ENCODE measurements at regions of chr4 and their contacts with region 1.

Region 1: GRCh38 chr4:110005461-110006056 is 92.9 kb downstream of the EGF start:
- DNase-seq: peak; percentile 80
- H3K4me3 Mint-ChIP-seq: no peak overlapping the region
- H3K27ac Mint-ChIP-seq: no peak overlapping the region
- H3K4me1 Mint-ChIP-seq: peaks cover 19% of the 10 kb centered on the region
- H3K27me3 Mint-ChIP-seq: peaks cover 7% of the 10 kb centered on the region

Region 2: GRCh38 chr4:109424093-109424841 is 581.3 kb before region 1 on chr4:
- intact Hi-C with region 1: no loop called
- DNase-seq: no peak
- H3K4me3 Mint-ChIP-seq: no peak overlapping the region
- H3K27ac Mint-ChIP-seq: no peak overlapping the region
- H3K4me1 Mint-ChIP-seq: peaks cover 6% of the 10 kb centered on the region
- H3K27me3 Mint-ChIP-seq: peaks cover 9% of the 10 kb centered on the region

Region 3: GRCh38 chr4:110211007-110211769 is 205.6 kb after region 1 on chr4:
- intact Hi-C with region 1: loop called (anchors 2 kb)
- DNase-seq: peak; percentile 74
- H3K4me3 Mint-ChIP-seq: no peak overlapping the region
- H3K27ac Mint-ChIP-seq: no peak overlapping the region
- H3K4me1 Mint-ChIP-seq: peaks cover 5% of the 10 kb centered on the region
- H3K27me3 Mint-ChIP-seq: peaks cover 7% of the 10 kb centered on the region

Region 4: DNA sequence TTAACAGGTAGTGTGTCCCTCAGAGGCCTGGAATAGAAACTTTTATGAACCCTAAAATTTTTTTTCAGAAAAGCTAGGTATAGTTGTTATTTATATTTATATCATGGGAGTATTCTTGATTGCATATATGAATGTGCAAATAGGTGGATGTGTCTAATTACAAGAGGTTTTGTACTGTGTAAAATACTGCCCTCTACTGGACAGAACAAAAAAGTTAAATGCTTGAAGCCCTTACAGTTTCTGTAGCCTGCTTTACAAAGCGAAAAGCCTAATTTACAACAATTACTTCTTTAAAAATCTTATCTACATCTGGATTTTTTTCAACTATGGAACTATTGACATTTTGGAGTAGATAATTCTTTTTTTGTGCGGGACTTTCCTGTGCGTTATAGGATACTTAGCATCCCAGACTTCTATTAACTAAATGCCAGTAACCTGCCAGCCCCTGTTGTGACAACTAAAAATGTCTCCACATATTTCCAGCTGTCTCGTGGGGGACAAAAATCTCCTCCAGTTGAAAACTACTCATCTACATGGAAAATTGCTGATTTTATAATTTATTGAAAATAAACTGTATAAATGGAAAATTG is 505.5 kb after region 1 on chr4:
- intact Hi-C with region 1: loop called (anchors 1 kb)
- DNase-seq: no peak
- H3K4me3 Mint-ChIP-seq: no peak overlapping the region
- H3K27ac Mint-ChIP-seq: no peak overlapping the region
- H3K4me1 Mint-ChIP-seq: peaks cover 7% of the 10 kb centered on the region
- H3K27me3 Mint-ChIP-seq: peaks cover 6% of the 10 kb centered on the region